Sigmoid colon (tissue), 7 donors: ENCODE measurements at regions of chr6 and their contacts with region 1.

Region 1: DNA sequence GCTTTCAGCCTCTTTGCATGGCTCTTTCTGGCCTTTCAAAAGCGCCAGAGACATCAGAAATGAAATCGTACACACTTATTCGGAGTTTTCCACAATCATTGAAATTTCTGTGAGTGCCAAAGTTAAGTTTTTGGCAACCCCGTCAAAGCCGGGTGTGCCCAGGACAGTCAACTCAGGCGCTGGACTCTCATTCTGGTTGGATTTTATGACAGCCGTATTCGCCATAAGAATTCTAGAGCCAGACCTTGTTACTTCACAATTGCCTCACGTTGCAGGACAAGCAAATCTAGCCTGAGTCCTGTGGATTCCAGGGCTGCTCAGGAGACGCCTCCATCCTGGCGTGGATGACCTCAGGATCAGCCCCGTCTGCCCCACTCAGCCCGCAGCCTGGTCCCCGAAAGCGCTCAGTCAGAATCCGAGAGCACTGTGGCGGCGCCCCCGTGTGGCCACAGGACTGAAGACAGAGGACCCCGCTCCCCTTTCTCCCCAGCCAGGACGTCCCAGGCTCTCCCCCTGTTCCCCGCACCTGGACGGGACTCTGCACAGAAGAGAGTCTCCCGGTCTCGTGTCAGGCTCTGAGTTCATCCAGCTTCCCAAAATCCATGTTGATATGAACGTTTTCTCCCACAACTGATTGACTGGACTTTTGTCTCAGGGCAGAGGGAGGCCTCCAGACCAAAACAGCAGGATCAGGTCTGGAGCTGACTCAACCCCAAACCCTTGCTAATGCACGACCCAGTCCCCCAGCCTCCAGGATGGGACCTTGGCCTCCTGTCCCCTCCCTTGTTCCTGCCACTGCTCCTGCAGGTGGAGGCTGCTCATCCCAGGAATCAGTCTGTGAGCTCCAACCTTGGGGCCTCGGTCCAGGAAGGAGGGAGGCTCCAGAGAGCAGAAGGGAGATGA is 38.2 kb downstream of the MICA start:
- DNase-seq: peak; percentile 91
- H3K4me3 ChIP-seq: peak overlapping the region in 1 of 4 donors; percentile 14
- H3K27ac ChIP-seq: no peak overlapping the region
- H3K4me1 ChIP-seq: peaks cover 0 to 9% (median 4%) of the 10 kb centered on the region in 4 donors
- H3K27me3 ChIP-seq: no peaks in the 10 kb centered on the region
- CTCF ChIP-seq: peak; percentile 53 to 90 (median 78)
- EP300 ChIP-seq: no peak
- POLR2A ChIP-seq: no peak

Region 2: DNA sequence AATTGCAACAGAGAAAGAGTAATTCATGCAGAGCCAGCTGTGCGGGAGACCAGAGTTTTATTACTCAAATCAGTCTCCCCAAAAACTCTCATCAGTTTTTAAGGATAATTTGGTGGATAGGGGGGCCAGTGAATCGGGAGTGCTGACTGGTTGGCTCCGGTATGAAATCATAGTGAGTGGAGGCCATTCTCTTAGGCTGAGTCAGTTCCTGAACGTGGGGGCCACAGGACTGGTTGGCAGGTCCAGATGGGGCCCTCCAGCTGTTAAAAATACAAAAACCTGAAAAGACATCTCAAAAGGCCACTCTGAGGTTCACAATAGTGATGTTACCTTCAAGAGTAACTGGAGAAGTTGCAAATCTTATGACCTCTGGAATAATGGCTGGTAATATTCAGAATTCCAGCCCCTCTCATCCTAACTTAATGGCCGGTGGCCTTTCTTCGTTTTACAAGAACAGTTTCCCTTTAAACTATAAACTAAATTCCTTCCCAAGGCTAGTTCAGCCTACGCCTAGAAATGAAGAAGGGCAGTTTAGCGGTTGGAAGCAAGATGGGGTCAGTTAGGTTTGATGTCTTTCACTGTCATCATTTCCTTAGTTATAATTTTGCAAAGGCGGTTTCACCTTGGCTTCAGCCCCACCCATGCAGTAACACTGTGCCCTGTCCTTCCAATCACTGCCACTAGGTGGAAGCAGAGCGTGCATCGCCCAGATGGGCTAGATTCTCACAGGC is 45.0 kb before region 1 on chr6:
- intact Hi-C with region 1: loop called (anchors 1 kb)
- DNase-seq: peak; percentile 90
- H3K4me3 ChIP-seq: no peak overlapping the region
- H3K27ac ChIP-seq: no peak overlapping the region
- H3K4me1 ChIP-seq: peaks cover 0 to 29% (median 20%) of the 10 kb centered on the region in 4 donors
- H3K27me3 ChIP-seq: no peaks in the 10 kb centered on the region
- CTCF ChIP-seq: peak; percentile 37 to 87 (median 78)
- EP300 ChIP-seq: no peak
- POLR2A ChIP-seq: no peak